ENCODE measurements at regions of chr5 and their contacts with region 1.

Region 1: GRCh38 chr5:126757713-126758357 is 19.1 kb upstream of the LMNB1 start:
- DNase-seq: no peak
- ATAC-seq: no peak
- H3K4me3 ChIP-seq: no peak overlapping the region
- H3K4me3 Mint-ChIP-seq: peak overlapping the region in 6 of 10 donors; percentile 6 to 72 (median 44)
- H3K27ac ChIP-seq: no peak overlapping the region
- H3K27ac Mint-ChIP-seq: peak overlapping the region in 6 of 9 donors; percentile 2 to 88 (median 32)
- H3K4me1 ChIP-seq: peaks cover 0 to 6% of the 10 kb centered on the region in 2 donors
- H3K4me1 Mint-ChIP-seq: peaks cover 7 to 51% (median 12%) of the 10 kb centered on the region in 7 donors
- H3K27me3 ChIP-seq: no peaks in the 10 kb centered on the region
- H3K27me3 Mint-ChIP-seq: no peaks in the 10 kb centered on the region

Region 2: DNA sequence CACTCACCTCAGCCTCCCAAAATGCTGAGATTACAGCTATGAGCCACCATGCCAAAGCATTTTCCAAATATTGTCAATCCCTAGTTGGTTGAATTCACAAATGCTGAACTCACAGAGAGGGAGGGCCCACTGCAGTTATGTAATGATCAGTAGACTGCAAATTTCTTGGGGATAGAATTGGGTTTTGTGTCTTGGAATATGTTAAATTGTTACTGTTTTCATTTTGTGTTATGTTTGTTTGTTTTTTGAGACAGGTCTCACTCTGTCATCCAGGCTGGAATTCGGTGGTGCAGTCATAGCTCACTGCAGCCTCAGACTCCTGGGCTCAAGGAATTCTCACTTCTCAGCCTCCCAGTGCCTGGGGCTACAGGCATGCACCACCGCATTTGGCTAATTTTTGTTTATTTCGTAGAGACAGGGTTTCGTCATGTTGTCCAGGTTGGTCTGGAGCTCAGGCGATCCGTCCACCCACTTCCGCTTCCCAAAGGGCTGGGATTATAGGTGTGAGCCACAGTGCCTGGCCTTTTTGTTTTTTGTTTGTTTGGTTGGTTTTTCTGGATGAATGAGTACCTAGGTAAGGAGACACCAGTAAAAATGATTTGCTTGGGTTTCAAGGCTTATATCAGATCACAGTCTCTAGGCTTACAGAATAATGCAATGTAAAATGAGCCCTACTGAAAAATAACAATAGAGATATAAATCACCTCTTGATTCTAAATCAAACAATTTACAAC is 12.4 kb before region 1 on chr5:
- CTCF ChIA-PET with region 1: no interaction called
- POLR2A ChIA-PET with region 1: no interaction called
- intact Hi-C with region 1: loop called in 1 of 2 experiments (anchors 1 kb)
- DNase-seq: no peak
- ATAC-seq: no peak
- H3K4me3 ChIP-seq: no peak overlapping the region
- H3K4me3 Mint-ChIP-seq: no peak overlapping the region
- H3K27ac ChIP-seq: no peak overlapping the region
- H3K27ac Mint-ChIP-seq: peak overlapping the region in 1 of 9 donors; percentile 26
- H3K4me1 ChIP-seq: peaks cover 4 to 13% of the 10 kb centered on the region in 2 donors
- H3K4me1 Mint-ChIP-seq: peaks cover 11 to 30% (median 19%) of the 10 kb centered on the region in 7 donors
- H3K27me3 ChIP-seq: no peaks in the 10 kb centered on the region
- H3K27me3 Mint-ChIP-seq: peaks cover 0 to 4% (median 0%) of the 10 kb centered on the region in 5 donors